GM10248 (cell line): ENCODE measurements at regions of chr20 and their contacts with region 1.

Region 1: DNA sequence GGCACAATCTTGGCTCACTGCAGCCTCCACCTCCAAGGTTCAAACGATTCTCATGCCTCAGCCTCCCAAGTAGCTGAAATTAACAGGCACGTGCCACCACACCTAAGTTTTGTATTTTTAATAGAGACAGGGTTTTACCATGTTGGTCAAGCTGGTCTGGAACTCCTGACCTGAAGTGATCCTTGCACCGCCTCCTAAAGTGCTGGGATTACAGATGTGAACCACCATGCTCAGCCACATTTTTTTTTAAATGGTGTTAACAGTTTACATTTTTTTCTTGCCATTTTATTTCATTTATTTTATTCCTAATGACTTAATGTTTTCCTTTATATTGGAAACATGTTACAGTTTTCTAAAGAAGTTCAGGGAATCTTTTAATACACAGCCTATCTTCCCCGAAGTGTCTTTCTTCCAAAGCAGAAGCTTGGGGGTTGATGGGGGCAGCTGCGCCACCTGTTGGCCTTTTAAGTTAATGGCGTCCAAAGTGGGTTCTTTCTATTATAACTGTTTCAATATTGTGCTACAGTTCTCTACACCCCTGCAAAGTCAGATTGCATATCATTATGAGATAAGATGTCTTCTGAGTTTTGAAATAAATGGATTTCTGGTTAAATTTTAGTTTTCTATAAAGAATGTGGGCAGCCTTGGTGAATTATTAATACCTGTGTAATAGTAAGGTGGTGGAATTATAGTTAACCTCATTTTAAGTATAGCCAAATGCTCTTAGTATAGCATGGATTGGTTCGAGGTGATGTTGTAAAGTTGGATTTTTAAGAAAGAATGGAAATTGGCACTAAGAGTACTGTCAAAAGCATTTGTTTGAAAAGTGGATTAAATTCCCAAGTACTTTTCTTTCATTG is 42.0 kb upstream of the PLCG1 start:
- DNase-seq: peak; percentile 53
- CTCF ChIP-seq: peak; percentile 73

Region 2: DNA sequence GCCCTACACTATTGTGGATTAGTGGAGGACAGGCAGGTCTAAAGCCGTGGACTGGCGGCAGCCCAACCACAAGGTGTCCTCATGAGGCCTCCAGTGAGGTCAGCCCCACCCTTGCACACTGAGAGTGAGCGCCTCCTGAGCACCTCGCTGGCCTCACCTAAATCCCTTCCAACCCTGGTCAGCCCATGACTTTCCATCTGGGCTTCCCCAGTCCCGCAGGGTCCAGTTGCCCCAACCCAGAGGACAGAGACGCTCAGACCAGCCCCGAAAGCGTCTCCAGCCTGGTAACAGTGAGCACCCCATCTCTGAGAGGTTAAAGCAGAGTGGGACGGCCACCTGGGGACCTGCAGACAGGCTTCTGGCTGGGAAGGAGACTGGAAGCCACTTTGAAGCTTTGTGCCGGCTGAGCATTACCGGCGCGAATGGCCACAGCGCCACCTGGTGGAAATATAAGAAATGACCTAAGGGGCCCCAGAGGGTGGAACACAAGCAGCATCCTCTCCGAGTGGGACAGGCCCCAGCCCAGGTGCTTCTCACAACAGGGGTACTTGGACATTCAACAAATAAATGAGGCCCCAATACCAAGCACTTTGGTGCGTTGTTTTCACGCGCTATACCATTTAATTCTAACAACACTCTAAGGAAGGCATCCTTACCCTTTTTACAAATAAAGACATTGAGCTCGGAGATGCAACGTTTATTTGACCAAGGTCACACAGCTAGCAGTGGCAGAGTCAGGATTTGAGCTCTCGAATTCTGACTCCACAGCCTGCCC is 132.4 kb before region 1 on chr20:
- CTCF ChIA-PET with region 1: interaction called, 59 read pairs
- POLR2A ChIA-PET with region 1: no interaction called
- DNase-seq: peak; percentile 82
- CTCF ChIP-seq: peak; percentile 91

Region 3: GRCh38 chr20:41038878-41039404 is 56.4 kb before region 1 on chr20:
- CTCF ChIA-PET with region 1: no interaction called
- POLR2A ChIA-PET with region 1: no interaction called
- DNase-seq: peak; percentile 28
- CTCF ChIP-seq: no peak

Region 4: DNA sequence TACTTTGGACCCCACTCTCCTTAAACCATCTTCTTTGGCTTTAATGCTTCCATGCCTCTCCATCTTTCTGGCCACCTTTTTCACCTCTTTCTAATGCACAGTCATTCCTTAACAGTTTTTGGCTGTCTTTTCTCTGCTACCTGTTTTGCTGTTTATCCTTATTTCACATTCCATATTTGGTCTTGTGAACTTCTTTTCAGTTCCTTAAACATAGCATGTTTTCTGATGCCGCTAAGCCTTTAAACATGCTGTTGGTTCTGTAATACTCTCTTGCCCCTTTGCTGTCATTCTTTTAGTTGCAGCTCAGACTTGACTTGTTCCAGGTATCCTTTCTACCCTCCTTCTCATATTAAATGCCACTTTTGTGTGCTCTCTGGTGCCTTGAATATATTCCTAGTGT is 31.0 kb before region 1 on chr20:
- CTCF ChIA-PET with region 1: interaction called, 14 read pairs
- POLR2A ChIA-PET with region 1: no interaction called
- DNase-seq: peak; percentile 60
- CTCF ChIP-seq: peak; percentile 44

Region 5: GRCh38 chr20:41078329-41078728 is 17.0 kb before region 1 on chr20:
- CTCF ChIA-PET with region 1: interaction called, 32 read pairs
- POLR2A ChIA-PET with region 1: no interaction called
- DNase-seq: no peak
- CTCF ChIP-seq: no peak

Region 6: GRCh38 chr20:41119546-41120235 is 24.4 kb after region 1 on chr20:
- CTCF ChIA-PET with region 1: interaction called, 12 read pairs
- POLR2A ChIA-PET with region 1: no interaction called
- DNase-seq: no peak
- CTCF ChIP-seq: no peak